ENCODE measurements at regions of chr14 and their contacts with region 1.

Region 1: GRCh38 chr14:75864352-75864751 is 117.4 kb downstream of the TGFB3 start:
- DNase-seq: no peak
- H3K4me3 ChIP-seq: no peak overlapping the region
- H3K27ac ChIP-seq: no peak overlapping the region
- H3K4me1 ChIP-seq: peaks cover 7% of the 10 kb centered on the region
- H3K27me3 ChIP-seq: no peaks in the 10 kb centered on the region
- CTCF ChIP-seq: no peak
- POLR2A ChIP-seq: no peak

Region 2: GRCh38 chr14:75783184-75783583 is 81.2 kb before region 1 on chr14:
- intact Hi-C with region 1: no loop called
- DNase-seq: no peak
- H3K4me3 ChIP-seq: no peak overlapping the region
- H3K27ac ChIP-seq: no peak overlapping the region
- H3K4me1 ChIP-seq: no peaks in the 10 kb centered on the region
- H3K27me3 ChIP-seq: no peaks in the 10 kb centered on the region
- CTCF ChIP-seq: no peak
- POLR2A ChIP-seq: no peak

Region 3: GRCh38 chr14:75822522-75823141 is 41.7 kb before region 1 on chr14:
- intact Hi-C with region 1: loop called (anchors 2 kb)
- DNase-seq: no peak
- H3K4me3 ChIP-seq: no peak overlapping the region
- H3K27ac ChIP-seq: peak overlapping the region; percentile 76
- H3K4me1 ChIP-seq: peaks cover 27% of the 10 kb centered on the region
- H3K27me3 ChIP-seq: no peaks in the 10 kb centered on the region
- CTCF ChIP-seq: no peak
- POLR2A ChIP-seq: no peak

Measured in vagina (tissue), 2 donors.